Common myeloid progenitor, CD34-positive (primary cell): ENCODE measurements at regions of chr2 and their contacts with region 1.

Region 1: DNA sequence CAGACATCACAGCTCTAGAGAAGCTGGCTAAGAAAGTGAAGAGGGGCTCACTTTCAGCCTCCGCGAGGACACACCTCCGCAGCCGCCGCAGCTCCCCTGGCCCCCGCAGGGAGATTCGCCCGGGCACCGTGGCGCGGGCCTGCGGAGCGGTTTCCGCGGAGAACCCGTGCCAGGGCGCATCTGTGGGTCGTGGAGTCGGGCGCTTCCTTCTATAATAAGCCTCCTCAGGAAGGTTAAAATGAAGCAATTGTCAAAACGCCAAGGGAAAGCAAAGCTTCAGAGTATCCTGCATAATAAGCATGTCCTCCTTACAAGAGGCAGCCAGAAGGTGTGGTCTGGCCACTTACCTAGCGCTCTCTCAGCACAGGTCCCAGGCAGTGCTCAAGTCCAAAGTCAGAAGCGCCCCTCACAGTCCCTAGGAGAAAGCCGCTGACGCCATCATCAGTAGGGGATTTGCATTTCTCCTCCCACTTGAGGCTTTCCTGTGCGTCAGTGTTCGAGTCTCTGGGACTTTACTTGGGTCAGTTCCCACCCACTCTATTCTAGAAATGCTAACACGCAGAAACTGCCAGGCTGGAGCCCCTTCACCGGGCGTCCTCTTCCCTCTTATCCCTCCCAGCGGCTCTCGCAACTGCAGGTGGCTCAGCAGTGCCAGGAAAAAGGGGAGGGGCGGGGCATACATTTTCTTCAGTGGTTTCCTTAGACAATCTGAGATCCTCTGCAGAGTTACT is at the start of gene STAT4:
- DNase-seq: peak; percentile 88 to 92 (median 90)
- H3K4me3 ChIP-seq: peak within 1 kb of the TSS; percentile 57 to 93 (median 87)
- H3K27ac ChIP-seq: peak within 1 kb of the TSS; percentile 62 to 81
- H3K4me1 ChIP-seq: peaks cover 0 to 38% (median 16%) of the 10 kb centered on the region in 4 experiments
- H3K27me3 ChIP-seq: no peaks in the 10 kb centered on the region

Region 2: DNA sequence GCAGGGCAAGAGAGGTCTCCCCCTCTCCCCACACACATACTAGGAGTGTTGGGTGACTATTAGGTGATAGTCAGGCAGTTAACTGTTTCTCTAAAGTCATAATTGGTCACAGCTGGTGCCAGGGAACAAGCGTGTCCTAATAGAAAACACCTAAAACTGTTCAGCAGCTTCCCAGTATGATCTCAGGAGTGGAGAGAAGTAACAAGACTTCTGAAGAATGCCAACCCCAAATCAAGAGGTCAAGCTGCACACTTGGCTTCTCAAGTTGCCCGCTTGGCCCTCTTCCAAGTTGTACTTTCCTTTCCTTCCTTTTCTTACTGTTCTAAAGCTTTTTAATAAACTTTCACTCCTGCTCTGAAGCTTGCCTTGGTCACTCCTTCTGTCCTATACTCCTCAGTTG is 114.4 kb before region 1 on chr2:
- CTCF ChIA-PET with region 1: interaction called, 11 read pairs
- POLR2A ChIA-PET with region 1: no interaction called
- DNase-seq: no peak
- H3K4me3 ChIP-seq: no peak overlapping the region
- H3K27ac ChIP-seq: no peak overlapping the region
- H3K4me1 ChIP-seq: peaks cover 0 to 30% (median 9%) of the 10 kb centered on the region in 4 experiments
- H3K27me3 ChIP-seq: no peaks in the 10 kb centered on the region

Region 3: GRCh38 chr2:191059308-191059707 is 91.5 kb before region 1 on chr2:
- CTCF ChIA-PET with region 1: interaction called, 250 read pairs
- POLR2A ChIA-PET with region 1: no interaction called
- DNase-seq: no peak
- H3K4me3 ChIP-seq: no peak overlapping the region
- H3K27ac ChIP-seq: no peak overlapping the region
- H3K4me1 ChIP-seq: peaks cover 8 to 32% (median 14%) of the 10 kb centered on the region in 4 experiments
- H3K27me3 ChIP-seq: no peaks in the 10 kb centered on the region

Region 4: GRCh38 chr2:191066197-191066918 is 84.4 kb before region 1 on chr2:
- CTCF ChIA-PET with region 1: interaction called, 13 read pairs
- POLR2A ChIA-PET with region 1: interaction called, 3 read pairs
- DNase-seq: peak in 2 of 3 donors; percentile 9 to 25
- H3K4me3 ChIP-seq: peak overlapping the region in 5 of 7 experiments; percentile 39 to 74 (median 47)
- H3K27ac ChIP-seq: peak overlapping the region; percentile 29 to 54
- H3K4me1 ChIP-seq: peaks cover 4 to 64% (median 28%) of the 10 kb centered on the region in 4 experiments
- H3K27me3 ChIP-seq: no peaks in the 10 kb centered on the region

Region 5: DNA sequence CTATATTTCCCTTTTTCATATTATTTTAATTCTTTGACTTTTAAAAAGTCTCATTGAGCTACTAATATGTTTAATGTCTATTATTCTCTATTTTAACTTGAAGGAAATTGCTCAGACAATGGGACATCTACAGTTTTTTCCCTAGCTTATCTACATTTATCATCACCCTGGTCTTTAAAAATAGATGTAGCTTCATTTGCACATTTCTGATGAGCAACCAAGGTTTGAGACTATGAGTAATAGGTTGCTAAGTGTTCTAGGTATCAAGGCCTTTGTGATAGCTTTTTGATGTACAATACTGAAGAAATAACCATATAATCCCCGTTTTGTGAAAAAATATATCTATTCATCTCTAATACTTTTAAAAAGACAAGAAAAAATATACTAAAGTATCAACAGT is 47.0 kb before region 1 on chr2:
- CTCF ChIA-PET with region 1: interaction called, 10 read pairs
- POLR2A ChIA-PET with region 1: no interaction called
- DNase-seq: no peak
- H3K4me3 ChIP-seq: no peak overlapping the region
- H3K27ac ChIP-seq: no peak overlapping the region
- H3K4me1 ChIP-seq: peaks cover 0 to 5% (median 0%) of the 10 kb centered on the region in 4 experiments
- H3K27me3 ChIP-seq: no peaks in the 10 kb centered on the region

Region 6: DNA sequence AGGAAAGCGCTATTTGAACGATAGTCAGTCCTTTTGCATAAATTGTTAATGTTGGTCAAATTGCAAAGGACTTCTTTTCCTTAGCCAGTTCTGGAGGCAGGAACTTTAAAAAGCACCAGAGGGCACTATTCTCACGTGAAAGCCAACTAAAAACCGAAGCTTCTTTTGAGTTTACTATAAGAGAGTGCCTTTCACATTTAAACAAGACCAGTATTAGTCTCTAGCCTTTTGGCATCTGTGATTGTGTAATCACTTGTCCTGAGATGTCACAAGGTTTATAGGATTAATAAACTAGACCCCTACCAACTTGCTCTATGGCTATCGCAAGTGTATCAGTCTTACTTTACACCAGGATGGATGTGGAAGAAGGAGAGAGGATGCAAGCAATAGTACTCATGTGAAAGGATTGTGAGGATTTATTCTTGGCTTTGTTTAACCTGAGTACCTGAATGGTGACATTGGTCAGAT is 14.4 kb after region 1 on chr2:
- CTCF ChIA-PET with region 1: interaction called, 18 read pairs
- POLR2A ChIA-PET with region 1: no interaction called
- DNase-seq: peak; percentile 41 to 74 (median 64)
- H3K4me3 ChIP-seq: peak overlapping the region in 1 of 7 experiments; percentile 2
- H3K27ac ChIP-seq: no peak overlapping the region
- H3K4me1 ChIP-seq: no peaks in the 10 kb centered on the region
- H3K27me3 ChIP-seq: no peaks in the 10 kb centered on the region